ENCODE measurements at regions of chr9 and their contacts with region 1.

Region 1: DNA sequence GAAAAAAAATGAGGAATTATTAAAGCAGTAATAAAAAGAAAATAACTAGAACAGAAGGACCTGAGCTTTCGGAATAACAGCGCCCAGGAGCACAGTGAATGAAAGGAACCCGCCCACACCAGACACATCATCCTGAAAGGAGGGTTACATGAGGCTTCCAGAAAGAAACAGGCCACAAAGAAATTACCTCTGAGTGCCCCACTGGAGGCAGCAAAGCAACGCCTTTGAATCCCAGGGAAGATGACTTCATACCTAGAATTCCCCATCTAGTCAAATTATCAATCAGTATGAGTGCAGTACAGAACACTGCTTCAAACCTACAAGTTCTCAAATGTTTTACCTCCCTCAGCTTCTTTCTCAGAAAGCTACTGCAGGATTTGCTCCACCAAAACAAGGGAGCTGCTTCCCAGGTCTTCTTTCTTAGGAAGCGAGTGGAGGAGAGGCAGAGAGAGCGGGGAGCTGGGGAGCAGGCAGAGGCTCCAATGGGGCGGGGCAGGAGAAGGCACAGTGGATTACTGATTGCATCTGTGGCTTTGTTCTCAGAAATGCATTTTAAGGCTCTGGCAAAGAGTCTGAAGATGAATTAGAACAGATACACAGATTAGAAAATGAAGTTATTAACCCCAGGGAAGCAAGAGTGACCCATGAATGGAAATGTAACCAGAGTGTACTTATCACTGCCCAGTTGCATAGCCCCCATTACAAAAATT is 87.1 kb downstream of the SEMA4D start:
- DNase-seq: peak; percentile 85
- H3K4me3 Mint-ChIP-seq: peak overlapping the region; percentile 39
- H3K27ac Mint-ChIP-seq: peak overlapping the region; percentile 89
- H3K4me1 Mint-ChIP-seq: peaks cover 86% of the 10 kb centered on the region
- H3K27me3 Mint-ChIP-seq: no peaks in the 10 kb centered on the region

Region 2: GRCh38 chr9:88988796-88989560 is 421.8 kb before region 1 on chr9:
- CTCF ChIA-PET with region 1: no interaction called
- intact Hi-C with region 1: loop called (anchors 5 kb)
- DNase-seq: peak; percentile 38
- H3K4me3 Mint-ChIP-seq: peak overlapping the region; percentile 8
- H3K27ac Mint-ChIP-seq: peak overlapping the region; percentile 32
- H3K4me1 Mint-ChIP-seq: peaks cover 50% of the 10 kb centered on the region
- H3K27me3 Mint-ChIP-seq: peaks cover 30% of the 10 kb centered on the region

Region 3: DNA sequence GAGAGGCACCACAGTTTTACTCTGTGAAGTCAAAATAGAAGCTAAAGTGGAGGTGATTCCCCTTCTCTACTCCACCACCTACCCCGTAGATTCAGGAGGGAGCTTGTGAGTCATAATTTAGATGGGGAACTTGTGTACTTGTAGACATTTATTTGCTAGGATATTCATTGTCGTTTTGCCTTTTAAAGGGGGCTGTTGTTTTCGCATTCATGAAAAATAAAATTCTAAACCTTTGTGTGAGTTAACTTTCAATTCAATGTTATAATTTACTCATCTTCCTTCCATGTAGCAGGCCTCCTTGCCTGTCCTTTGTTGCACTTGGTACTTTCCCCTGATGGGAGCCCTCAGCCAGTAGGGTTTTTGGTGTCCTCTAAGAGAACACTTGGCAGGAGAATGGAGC is 70.5 kb before region 1 on chr9:
- CTCF ChIA-PET with region 1: no interaction called
- intact Hi-C with region 1: loop called (anchors 2 kb)
- DNase-seq: peak; percentile 31
- H3K4me3 Mint-ChIP-seq: no peak overlapping the region
- H3K27ac Mint-ChIP-seq: peak overlapping the region; percentile 67
- H3K4me1 Mint-ChIP-seq: peaks cover 48% of the 10 kb centered on the region
- H3K27me3 Mint-ChIP-seq: no peaks in the 10 kb centered on the region

Region 4: DNA sequence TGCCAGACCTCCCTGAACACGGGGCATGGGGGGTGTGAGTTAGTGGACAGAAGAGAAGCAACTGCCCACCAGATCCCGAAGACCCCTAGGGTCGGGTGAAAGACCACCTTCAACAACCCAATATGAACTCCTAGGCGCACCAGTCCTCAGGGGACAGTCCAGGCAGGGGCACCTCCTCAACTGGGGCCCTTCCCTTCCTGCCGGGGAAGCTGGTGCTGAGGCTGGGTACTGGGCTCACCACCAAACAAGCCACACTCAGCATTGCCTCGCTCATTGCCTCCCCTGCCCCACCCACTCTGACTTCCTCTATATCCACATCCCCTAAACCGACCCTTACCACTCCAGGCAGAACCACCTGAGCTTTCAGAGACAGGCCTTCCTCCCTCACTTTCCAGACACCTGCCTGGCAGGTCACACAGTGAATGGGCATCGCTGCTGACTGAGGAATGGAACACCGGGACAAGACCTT is 44.6 kb after region 1 on chr9:
- CTCF ChIA-PET with region 1: interaction called, 12 read pairs
- intact Hi-C with region 1: loop called (anchors 1 kb)
- DNase-seq: peak; percentile 63
- H3K4me3 Mint-ChIP-seq: peak overlapping the region; percentile 1
- H3K27ac Mint-ChIP-seq: peak overlapping the region; percentile 79
- H3K4me1 Mint-ChIP-seq: peaks cover 91% of the 10 kb centered on the region
- H3K27me3 Mint-ChIP-seq: no peaks in the 10 kb centered on the region

Region 5: GRCh38 chr9:89477811-89478630 is 67.2 kb after region 1 on chr9:
- CTCF ChIA-PET with region 1: interaction called, 9 read pairs
- intact Hi-C with region 1: loop called (anchors 2 kb)
- DNase-seq: peak; percentile 73
- H3K4me3 Mint-ChIP-seq: peak overlapping the region; percentile 78
- H3K27ac Mint-ChIP-seq: peak overlapping the region; percentile 97
- H3K4me1 Mint-ChIP-seq: peaks cover 89% of the 10 kb centered on the region
- H3K27me3 Mint-ChIP-seq: no peaks in the 10 kb centered on the region

Region 6: DNA sequence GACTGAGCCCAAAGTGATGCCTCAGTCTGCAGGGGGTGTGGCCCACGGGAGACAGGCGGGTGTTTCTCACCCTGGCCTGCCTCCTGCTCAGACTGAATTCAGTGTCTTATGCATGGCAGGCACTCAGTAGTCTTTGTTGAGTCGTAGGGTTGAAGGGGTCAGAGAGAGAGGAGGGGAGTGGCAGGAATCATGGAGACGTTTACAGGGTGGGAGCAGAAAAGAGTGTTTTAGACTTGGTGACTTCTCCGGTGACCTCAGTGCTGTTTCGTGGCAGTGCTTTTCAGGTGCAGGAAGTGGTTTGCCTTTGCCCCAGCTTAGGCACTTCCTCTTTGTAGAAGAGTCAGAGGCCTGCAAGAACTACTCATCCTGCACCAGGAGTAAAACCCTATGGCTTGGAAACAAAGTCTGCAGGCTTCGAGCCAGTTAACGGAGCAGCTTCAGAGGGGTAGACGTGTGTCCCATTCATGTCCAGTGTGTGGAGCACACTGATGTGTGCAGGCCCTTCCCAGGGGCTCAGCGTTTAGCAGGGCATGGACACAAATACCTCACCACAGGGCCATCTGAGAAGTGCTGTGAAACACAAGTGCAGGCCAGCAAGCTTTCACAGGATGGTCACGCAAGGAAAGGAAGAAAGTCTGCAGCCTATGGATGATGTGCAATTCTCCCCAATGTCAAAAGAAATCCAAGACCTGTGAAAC is 111.6 kb after region 1 on chr9:
- CTCF ChIA-PET with region 1: interaction called, 5 read pairs
- intact Hi-C with region 1: loop called (anchors 1 kb)
- DNase-seq: peak; percentile 89
- H3K4me3 Mint-ChIP-seq: peak overlapping the region; percentile 58
- H3K27ac Mint-ChIP-seq: peak overlapping the region; percentile 96
- H3K4me1 Mint-ChIP-seq: peaks cover 93% of the 10 kb centered on the region
- H3K27me3 Mint-ChIP-seq: no peaks in the 10 kb centered on the region